ENCODE measurements at regions of chr11 and their contacts with region 1.

Region 1: GRCh38 chr11:130237282-130238006 is 77.3 kb downstream of the ZBTB44 start:
- DNase-seq: no peak
- H3K4me3 ChIP-seq: no peak overlapping the region
- H3K27ac ChIP-seq: no peak overlapping the region
- H3K4me1 ChIP-seq: no peaks in the 10 kb centered on the region
- H3K27me3 ChIP-seq: no peaks in the 10 kb centered on the region
- CTCF ChIP-seq: no peak
- POLR2A ChIP-seq: no peak

Region 2: DNA sequence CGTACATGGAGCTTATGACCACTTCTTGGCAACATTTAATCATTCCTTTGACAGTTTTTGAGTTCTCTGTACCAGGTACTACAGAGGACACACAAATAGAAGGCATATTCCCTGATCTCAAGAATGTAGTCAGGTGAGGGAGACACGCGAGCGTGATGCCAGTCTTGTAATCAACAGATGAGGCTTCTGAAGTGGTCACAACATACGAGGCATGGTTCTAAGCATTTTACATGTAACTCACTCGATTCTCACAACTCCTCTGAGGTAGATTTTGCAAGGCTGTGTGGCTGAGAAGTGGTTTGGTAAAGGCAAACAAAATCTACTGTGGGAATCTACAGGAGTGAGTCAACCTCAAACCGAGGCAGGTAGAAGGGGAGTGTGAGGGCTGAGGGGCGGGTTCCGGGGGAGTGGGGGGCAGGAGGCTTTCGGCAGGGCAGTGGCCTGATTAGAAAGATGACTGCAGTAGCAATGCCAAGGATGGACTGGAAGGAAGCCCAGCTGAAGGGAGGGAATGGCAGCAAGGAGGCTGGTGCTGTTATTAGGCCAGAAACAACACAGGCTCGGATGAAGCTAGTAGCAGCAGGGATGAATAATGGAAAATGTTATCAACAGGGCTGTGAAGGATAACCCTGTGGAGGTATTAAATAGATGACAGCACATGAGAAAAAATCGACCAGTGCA is 14.0 kb before region 1 on chr11:
- CTCF ChIA-PET with region 1: no interaction called
- POLR2A ChIA-PET with region 1: no interaction called
- dilution Hi-C with region 1: no loop called
- intact Hi-C with region 1: loop called (anchors 1 kb)
- DNase-seq: no peak
- H3K4me3 ChIP-seq: no peak overlapping the region
- H3K27ac ChIP-seq: no peak overlapping the region
- H3K4me1 ChIP-seq: no peaks in the 10 kb centered on the region
- H3K27me3 ChIP-seq: no peaks in the 10 kb centered on the region
- CTCF ChIP-seq: no peak
- POLR2A ChIP-seq: no peak